ENCODE measurements at regions of chr15 and their contacts with region 1.

Region 1: DNA sequence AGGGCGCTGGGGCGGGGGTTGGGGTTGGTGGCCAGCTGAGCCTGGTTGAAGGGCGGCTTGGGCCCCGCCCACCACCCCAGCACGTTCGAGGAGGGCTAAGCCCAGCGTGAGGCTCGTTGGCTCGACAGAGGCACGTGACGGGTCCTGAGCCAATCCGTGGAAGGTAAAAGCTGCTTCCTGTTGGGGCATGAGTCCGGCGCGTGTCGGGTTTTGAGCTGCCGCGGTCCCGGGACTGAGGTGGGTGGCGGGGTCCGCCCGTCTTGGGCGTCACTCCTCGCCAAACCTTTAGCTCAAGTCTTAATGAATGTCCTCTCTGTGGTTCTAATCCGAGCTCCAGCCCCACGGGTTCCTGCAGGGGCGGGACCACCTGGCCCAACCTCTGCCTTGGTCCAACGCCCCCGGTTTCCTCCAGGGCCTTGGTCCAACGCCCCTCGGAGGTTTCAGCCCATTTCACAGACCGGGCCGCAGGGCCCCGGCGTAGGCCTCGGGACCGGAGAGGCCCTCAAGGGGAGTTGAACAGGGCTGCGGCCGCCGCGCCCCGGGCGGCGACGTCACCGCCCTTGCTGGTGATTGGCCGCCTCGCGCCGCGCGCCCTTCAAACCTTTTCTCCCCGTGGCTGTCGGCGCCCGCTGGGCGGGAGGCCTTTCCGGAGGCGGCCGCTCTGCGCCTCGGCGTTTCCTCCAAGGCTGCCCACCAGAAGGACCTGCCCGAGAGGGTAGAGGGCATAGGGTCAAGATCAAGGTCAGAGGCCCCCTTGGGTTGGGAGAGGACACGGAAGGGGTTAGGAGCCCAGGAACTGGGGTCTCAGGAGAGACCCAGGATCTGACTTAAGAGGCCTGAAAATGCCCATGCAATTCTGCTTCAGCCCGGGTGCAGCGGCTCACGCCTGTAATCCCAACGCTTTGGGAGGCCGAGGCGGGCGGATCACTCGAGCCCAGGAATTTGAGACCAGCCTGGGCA is at the start of gene RCCD1:
- DNase-seq: peak; percentile 93
- ATAC-seq: peak; percentile 75
- H3K4me3 Mint-ChIP-seq: peak within 1 kb of the TSS; percentile 74
- H3K27ac Mint-ChIP-seq: peak within 1 kb of the TSS; percentile 76
- H3K4me1 Mint-ChIP-seq: peaks cover 16% of the 10 kb centered on the region
- H3K27me3 Mint-ChIP-seq: no peaks in the 10 kb centered on the region
- CTCF ChIP-seq: no peak
- total RNA-seq, gene RCCD1: 26.1 to 31.9 TPM (median 27.8 TPM) in 3 replicates

Region 2: DNA sequence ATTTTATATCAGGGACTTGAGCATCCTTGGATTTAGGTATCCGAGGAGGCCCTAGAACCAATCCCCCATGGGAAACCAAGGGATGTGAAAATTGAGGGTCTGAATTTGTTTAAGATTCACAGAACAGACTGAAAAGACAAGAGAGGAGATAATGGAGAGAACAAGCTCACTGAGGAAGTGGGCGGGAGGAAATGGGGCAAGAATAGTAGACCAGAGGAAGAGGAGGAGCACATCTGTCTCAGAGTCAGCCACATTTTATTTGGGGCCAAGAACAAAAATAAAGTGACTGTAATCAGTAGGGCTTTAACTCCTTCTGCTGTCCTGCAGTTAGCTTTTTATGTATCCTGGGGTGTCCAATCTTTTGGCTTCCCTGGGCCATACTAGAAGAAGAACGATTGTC is 174.1 kb before region 1 on chr15:
- CTCF ChIA-PET with region 1: no interaction called
- POLR2A ChIA-PET with region 1: no interaction called
- DNase-seq: no peak
- ATAC-seq: no peak
- H3K4me3 Mint-ChIP-seq: no peak overlapping the region
- H3K27ac Mint-ChIP-seq: peak overlapping the region; percentile 86; the same call in 1 of the 2 replicates
- H3K4me1 Mint-ChIP-seq: no peaks in the 10 kb centered on the region
- H3K27me3 Mint-ChIP-seq: no peaks in the 10 kb centered on the region
- CTCF ChIP-seq: no peak

Region 3: GRCh38 chr15:90886041-90886614 is 68.9 kb before region 1 on chr15:
- CTCF ChIA-PET with region 1: interaction called, 19 read pairs
- POLR2A ChIA-PET with region 1: no interaction called
- DNase-seq: peak; percentile 89
- ATAC-seq: peak; percentile 47
- H3K4me3 Mint-ChIP-seq: no peak overlapping the region
- H3K27ac Mint-ChIP-seq: no peak overlapping the region
- H3K4me1 Mint-ChIP-seq: peaks cover 22% of the 10 kb centered on the region
- H3K27me3 Mint-ChIP-seq: no peaks in the 10 kb centered on the region
- CTCF ChIP-seq: peak; percentile 93

Region 4: GRCh38 chr15:90970274-90970673 is 15.3 kb after region 1 on chr15:
- CTCF ChIA-PET with region 1: interaction called, 50 read pairs
- POLR2A ChIA-PET with region 1: interaction called, 5 read pairs
- DNase-seq: no peak
- ATAC-seq: no peak
- H3K4me3 Mint-ChIP-seq: no peak overlapping the region
- H3K27ac Mint-ChIP-seq: no peak overlapping the region
- H3K4me1 Mint-ChIP-seq: no peaks in the 10 kb centered on the region
- H3K27me3 Mint-ChIP-seq: no peaks in the 10 kb centered on the region
- CTCF ChIP-seq: no peak

Region 5: DNA sequence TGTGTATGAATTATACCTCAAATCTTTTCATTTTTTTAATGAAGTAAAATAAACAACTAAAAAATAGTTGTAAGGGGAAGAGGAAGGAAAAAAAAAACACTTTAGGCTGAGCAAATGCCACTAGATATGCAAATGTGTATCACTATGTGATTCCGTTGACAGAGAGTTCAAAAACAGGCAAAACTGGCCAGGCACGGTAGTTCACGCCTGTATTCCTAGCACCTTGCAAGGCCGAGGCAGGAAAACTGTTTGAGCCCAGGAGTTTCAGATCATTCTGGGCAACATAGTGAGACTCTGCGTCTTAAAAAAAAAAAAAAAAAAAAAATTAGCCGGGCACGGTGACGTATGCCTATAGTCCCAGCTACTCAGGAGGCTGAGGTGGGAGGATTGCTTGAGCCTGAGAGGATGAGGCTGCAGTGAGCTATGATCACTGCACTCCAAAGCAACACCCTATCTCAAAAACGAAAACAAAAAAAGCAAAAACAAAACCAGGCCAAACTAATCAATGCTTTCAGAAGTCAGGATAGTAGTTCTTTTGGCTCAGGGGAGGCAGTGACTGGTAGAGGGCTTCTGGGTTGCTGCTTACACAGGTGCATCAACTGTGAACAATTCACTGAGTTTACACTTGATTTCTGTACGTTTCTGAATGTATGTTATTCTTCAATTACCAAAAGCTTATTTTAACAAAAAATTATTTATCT is 32.0 kb after region 1 on chr15:
- CTCF ChIA-PET with region 1: interaction called, 26 read pairs
- POLR2A ChIA-PET with region 1: no interaction called
- DNase-seq: no peak
- ATAC-seq: no peak
- H3K4me3 Mint-ChIP-seq: no peak overlapping the region
- H3K27ac Mint-ChIP-seq: peak overlapping the region; percentile 72; the same call in 1 of the 2 replicates
- H3K4me1 Mint-ChIP-seq: peaks cover 21% of the 10 kb centered on the region
- H3K27me3 Mint-ChIP-seq: no peaks in the 10 kb centered on the region
- CTCF ChIP-seq: no peak

Region 6: GRCh38 chr15:91022075-91022835 is 67.3 kb after region 1 on chr15 and contains the start of gene VPS33B:
- CTCF ChIA-PET with region 1: interaction called, 25 read pairs
- POLR2A ChIA-PET with region 1: no interaction called
- DNase-seq: peak; percentile 82
- ATAC-seq: peak; percentile 92
- H3K4me3 Mint-ChIP-seq: peak within 1 kb of the TSS; percentile 88
- H3K27ac Mint-ChIP-seq: peak within 1 kb of the TSS; percentile 89
- H3K4me1 Mint-ChIP-seq: peaks cover 11% of the 10 kb centered on the region
- H3K27me3 Mint-ChIP-seq: no peaks in the 10 kb centered on the region
- CTCF ChIP-seq: no peak
- total RNA-seq, gene VPS33B: 18.1 to 21.1 TPM (median 20.7 TPM) in 3 replicates

Region 7: GRCh38 chr15:91049378-91050127 is 94.6 kb after region 1 on chr15:
- CTCF ChIA-PET with region 1: interaction called, 41 read pairs
- POLR2A ChIA-PET with region 1: interaction called, 3 read pairs
- DNase-seq: peak; percentile 60
- ATAC-seq: peak; percentile 96
- H3K4me3 Mint-ChIP-seq: no peak overlapping the region
- H3K27ac Mint-ChIP-seq: no peak overlapping the region
- H3K4me1 Mint-ChIP-seq: no peaks in the 10 kb centered on the region
- H3K27me3 Mint-ChIP-seq: no peaks in the 10 kb centered on the region; the same call in 1 of the 2 replicates
- CTCF ChIP-seq: no peak

Region 8: DNA sequence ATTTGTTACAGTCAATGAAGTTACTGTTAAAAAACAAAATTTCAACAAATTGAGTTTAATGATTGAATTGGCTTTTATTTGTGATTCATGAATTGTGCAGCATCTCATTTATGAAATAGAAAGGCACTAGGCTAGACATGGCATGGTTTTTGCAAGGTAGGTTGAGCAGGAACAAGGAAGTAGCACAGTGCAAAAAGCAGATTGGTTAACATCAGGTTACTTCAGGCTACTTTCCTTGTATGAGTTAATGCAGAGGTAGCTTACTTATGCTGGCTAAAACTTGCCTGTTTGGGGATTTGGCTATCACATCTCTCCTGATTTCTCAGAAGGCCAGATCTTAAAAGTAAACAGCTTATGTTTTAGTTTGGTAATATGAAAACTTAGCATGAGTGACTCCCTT is 122.0 kb after region 1 on chr15:
- CTCF ChIA-PET with region 1: no interaction called
- POLR2A ChIA-PET with region 1: no interaction called
- DNase-seq: no peak
- ATAC-seq: no peak
- H3K4me3 Mint-ChIP-seq: no peak overlapping the region
- H3K27ac Mint-ChIP-seq: no peak overlapping the region
- H3K4me1 Mint-ChIP-seq: no peaks in the 10 kb centered on the region
- H3K27me3 Mint-ChIP-seq: no peaks in the 10 kb centered on the region; the same call in 1 of the 2 replicates
- CTCF ChIP-seq: no peak

Region 9: GRCh38 chr15:91246998-91247397 is 292.0 kb after region 1 on chr15:
- CTCF ChIA-PET with region 1: interaction called, 17 read pairs
- POLR2A ChIA-PET with region 1: no interaction called
- DNase-seq: no peak
- ATAC-seq: no peak
- H3K4me3 Mint-ChIP-seq: no peak overlapping the region
- H3K27ac Mint-ChIP-seq: no peak overlapping the region
- H3K4me1 Mint-ChIP-seq: peaks cover 4% of the 10 kb centered on the region; the same call in 1 of the 2 replicates
- H3K27me3 Mint-ChIP-seq: peaks cover 4% of the 10 kb centered on the region; the same call in 1 of the 2 replicates
- CTCF ChIP-seq: no peak